ENCODE measurements at regions of chr3 and their contacts with region 1.

Region 1: DNA sequence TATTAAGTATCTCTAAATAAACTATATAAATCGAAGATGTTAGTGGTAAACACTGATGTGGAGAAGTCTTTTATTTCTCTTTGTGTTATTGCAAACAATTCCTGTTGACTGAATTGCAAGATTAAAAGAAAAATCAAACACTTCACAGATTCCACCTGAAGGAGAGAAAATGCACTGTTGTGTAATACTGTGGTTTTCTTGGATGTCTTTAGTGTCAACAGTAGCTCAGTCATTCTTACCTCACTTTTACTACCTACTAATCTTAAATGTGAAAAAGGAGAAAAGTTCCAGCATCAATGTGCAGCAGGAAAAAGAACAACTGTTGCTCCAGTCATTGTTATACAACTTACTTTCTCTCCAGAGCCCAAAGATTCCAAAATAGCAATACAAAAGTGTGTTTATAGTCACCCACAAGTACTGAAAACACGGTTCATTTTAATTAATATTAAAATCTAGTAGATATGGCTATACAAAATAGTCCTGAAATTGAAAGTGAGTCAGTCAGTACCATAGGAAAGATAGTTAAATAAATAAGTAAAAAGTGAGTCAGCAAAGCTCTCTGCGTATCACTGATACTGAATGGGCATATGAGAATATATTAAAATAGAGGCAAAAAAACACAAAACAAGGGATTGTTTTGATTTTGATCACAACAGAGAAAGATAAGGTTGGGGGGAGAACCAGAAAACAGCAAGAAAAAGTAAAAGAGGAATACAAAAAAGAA is 90.5 kb upstream of the CSPG5 start:
- DNase-seq: no peak
- H3K4me3 ChIP-seq: no peak overlapping the region
- H3K27ac ChIP-seq: no peak overlapping the region
- H3K4me1 ChIP-seq: peaks cover 0 to 3% (median 0%) of the 10 kb centered on the region in 4 donors
- H3K27me3 ChIP-seq: no peaks in the 10 kb centered on the region
- CTCF ChIP-seq: no peak
- EP300 ChIP-seq: no peak
- POLR2A ChIP-seq: no peak

Region 2: DNA sequence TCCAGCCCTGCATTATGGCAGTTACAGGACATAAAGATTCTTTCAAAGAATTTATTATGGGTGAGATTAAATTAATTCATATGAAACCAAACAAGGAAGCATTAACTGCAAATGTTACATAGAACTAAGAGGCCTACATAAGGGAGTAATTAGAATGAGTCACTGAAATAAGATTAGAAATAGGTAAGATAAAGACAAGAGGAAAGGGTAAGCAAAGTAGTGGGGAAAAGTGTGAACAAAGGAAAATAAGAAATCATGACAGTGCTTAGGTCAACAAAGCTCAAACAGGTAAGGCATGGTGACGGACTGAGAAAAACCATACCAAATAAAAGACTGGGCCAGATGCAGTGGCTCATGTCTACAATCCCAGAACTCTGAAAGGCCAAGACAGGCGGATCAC is 579.6 kb before region 1 on chr3:
- in situ Hi-C with region 1: no loop called
- intact Hi-C with region 1: loop called (anchors 5 kb)
- DNase-seq: no peak
- H3K4me3 ChIP-seq: no peak overlapping the region
- H3K27ac ChIP-seq: no peak overlapping the region
- H3K4me1 ChIP-seq: no peaks in the 10 kb centered on the region
- H3K27me3 ChIP-seq: no peaks in the 10 kb centered on the region
- CTCF ChIP-seq: no peak
- EP300 ChIP-seq: no peak
- POLR2A ChIP-seq: no peak

Region 3: DNA sequence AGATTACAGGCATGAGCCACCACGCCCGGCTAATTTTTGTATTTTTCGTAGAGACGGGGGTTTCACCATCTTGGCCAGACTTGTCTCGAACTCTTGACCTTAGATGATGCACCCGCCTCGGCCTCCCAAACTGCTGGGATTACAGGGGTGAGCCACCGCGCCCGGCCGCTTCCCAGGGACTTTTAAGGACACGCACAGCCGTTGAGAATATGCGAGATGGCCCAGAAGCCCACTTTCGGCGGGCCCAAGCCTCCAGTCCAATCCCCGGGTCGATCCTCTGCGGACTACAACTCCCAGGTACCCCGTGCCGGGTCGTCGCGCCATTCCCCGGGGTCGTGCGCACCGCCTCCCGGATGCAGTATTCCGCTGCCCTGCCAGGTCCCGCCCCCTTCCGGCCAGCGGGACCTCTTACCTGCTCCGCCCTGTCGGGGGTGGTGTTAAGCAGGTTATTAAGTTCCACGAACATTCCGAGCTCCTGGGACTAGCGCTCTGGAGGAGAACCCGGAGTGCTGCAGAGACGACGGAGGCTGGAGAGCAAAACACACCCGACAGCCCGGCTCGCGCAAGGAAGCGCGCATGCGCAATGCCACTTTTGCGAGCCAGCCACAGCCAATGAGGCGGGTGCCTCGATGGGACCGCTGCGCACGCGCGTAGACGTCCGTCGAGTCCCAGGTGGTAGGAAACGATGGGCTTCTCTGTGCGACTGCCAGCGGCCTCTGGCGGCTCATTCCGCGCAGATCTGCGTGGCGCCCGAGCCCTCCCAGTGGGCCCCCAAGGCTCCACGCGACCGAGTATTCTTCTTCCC is 155.9 kb before region 1 on chr3 and contains the start of gene ELP6:
- in situ Hi-C with region 1: no loop called
- intact Hi-C with region 1: no loop called
- DNase-seq: peak; percentile 97
- H3K4me3 ChIP-seq: peak within 1 kb of the TSS; percentile 49 to 84 (median 76)
- H3K27ac ChIP-seq: peak within 1 kb of the TSS; percentile 92 to 99 (median 94)
- H3K4me1 ChIP-seq: peaks cover 0 to 18% (median 12%) of the 10 kb centered on the region in 4 donors
- H3K27me3 ChIP-seq: no peaks in the 10 kb centered on the region
- CTCF ChIP-seq: peak; percentile 29 to 75 (median 53)
- EP300 ChIP-seq: no peak
- POLR2A ChIP-seq: peak; percentile 79
- total RNA-seq, gene ELP6: 1.2 to 55.7 (median 28.3) TPM

Region 4: GRCh38 chr3:47612178-47612577 is 57.0 kb before region 1 on chr3:
- in situ Hi-C with region 1: no loop called
- intact Hi-C with region 1: no loop called
- DNase-seq: no peak
- H3K4me3 ChIP-seq: no peak overlapping the region
- H3K27ac ChIP-seq: peak overlapping the region; percentile 24 to 48 (median 34)
- H3K4me1 ChIP-seq: peaks cover 0 to 27% (median 8%) of the 10 kb centered on the region in 4 donors
- H3K27me3 ChIP-seq: no peaks in the 10 kb centered on the region
- CTCF ChIP-seq: no peak
- EP300 ChIP-seq: no peak
- POLR2A ChIP-seq: no peak

Region 5: GRCh38 chr3:47646362-47646761 is 22.8 kb before region 1 on chr3:
- in situ Hi-C with region 1: no loop called
- intact Hi-C with region 1: no loop called
- DNase-seq: no peak
- H3K4me3 ChIP-seq: no peak overlapping the region
- H3K27ac ChIP-seq: no peak overlapping the region
- H3K4me1 ChIP-seq: peaks cover 0 to 7% (median 3%) of the 10 kb centered on the region in 4 donors
- H3K27me3 ChIP-seq: no peaks in the 10 kb centered on the region
- CTCF ChIP-seq: no peak
- EP300 ChIP-seq: no peak
- POLR2A ChIP-seq: no peak

Region 6: DNA sequence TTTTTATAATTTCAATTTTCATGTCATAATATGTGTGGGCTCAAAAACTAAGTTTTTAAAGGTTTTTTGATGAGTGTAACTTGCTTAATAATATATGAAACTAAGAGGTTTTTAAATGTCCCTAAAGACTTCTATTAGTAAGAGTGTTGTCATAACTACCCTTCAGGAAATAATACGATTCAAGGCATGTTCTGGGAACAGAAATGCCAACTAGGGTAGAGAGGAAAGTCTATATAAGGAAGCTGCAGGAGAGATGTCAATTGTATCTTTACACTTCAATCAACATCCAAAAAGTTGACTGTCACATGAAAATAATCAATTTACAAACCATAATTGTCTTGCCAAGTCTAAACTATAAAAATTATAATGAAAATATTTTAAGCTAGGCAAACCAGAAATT is 36.2 kb after region 1 on chr3:
- in situ Hi-C with region 1: no loop called
- intact Hi-C with region 1: no loop called
- DNase-seq: no peak
- H3K4me3 ChIP-seq: no peak overlapping the region
- H3K27ac ChIP-seq: no peak overlapping the region
- H3K4me1 ChIP-seq: peaks cover 0 to 13% (median 4%) of the 10 kb centered on the region in 4 donors
- H3K27me3 ChIP-seq: no peaks in the 10 kb centered on the region
- CTCF ChIP-seq: no peak
- EP300 ChIP-seq: no peak
- POLR2A ChIP-seq: no peak